Adrenal gland (tissue), 19 donors: ENCODE measurements at regions of chr4 and their contacts with region 1.

Region 1: GRCh38 chr4:78644744-78645330 is 93.3 kb downstream of the ANXA3 start:
- DNase-seq: peak; percentile 58 to 91 (median 72)
- H3K4me3 ChIP-seq: no peak overlapping the region
- H3K27ac ChIP-seq: peak overlapping the region in 3 of 5 donors; percentile 53 to 87 (median 68)
- H3K4me1 ChIP-seq: peaks cover 14 to 21% of the 10 kb centered on the region in 2 donors
- H3K27me3 ChIP-seq: no peaks in the 10 kb centered on the region
- CTCF ChIP-seq: peak; percentile 91 to 99 (median 96)
- POLR2A ChIP-seq: no peak

Region 2: GRCh38 chr4:78432896-78433295 is 211.9 kb before region 1 on chr4:
- intact Hi-C with region 1: no loop called
- DNase-seq: no peak
- H3K4me3 ChIP-seq: no peak overlapping the region
- H3K27ac ChIP-seq: no peak overlapping the region
- H3K4me1 ChIP-seq: no peaks in the 10 kb centered on the region
- H3K27me3 ChIP-seq: no peaks in the 10 kb centered on the region
- CTCF ChIP-seq: no peak
- POLR2A ChIP-seq: no peak

Region 3: DNA sequence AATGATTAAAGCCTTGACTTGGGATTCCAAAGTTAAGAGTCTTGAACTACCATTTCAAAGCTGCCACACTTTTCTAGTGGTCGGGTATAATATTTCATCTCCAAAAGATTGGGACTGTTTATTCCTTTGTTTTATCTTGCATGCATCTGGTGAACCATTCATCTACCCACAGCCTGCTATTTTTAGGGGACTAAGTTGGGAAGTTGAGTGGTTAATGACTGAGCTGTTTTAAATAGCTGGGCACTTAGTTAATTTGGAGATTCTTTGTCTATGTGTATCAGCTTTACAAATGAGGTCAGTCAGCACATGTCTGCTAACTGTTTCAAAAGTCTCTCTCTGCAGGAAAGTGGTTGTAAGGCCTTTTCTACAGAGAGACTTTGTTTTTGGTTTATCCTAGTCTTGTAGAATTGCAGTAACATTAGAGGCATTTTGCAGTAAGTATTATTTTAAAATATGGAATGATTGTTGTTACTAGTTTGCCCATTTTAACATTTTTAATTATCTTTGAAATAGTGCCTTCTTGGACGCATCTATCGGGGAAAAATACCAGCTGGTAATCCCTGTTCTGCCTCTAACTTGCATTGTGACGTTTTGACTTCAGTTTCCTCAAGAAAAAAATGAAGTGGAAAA is 139.5 kb after region 1 on chr4:
- intact Hi-C with region 1: loop called (anchors 10 kb)
- DNase-seq: no peak
- H3K4me3 ChIP-seq: no peak overlapping the region
- H3K27ac ChIP-seq: no peak overlapping the region
- H3K4me1 ChIP-seq: peaks cover 4 to 23% of the 10 kb centered on the region in 2 donors
- H3K27me3 ChIP-seq: no peaks in the 10 kb centered on the region
- CTCF ChIP-seq: no peak
- POLR2A ChIP-seq: no peak

Region 4: DNA sequence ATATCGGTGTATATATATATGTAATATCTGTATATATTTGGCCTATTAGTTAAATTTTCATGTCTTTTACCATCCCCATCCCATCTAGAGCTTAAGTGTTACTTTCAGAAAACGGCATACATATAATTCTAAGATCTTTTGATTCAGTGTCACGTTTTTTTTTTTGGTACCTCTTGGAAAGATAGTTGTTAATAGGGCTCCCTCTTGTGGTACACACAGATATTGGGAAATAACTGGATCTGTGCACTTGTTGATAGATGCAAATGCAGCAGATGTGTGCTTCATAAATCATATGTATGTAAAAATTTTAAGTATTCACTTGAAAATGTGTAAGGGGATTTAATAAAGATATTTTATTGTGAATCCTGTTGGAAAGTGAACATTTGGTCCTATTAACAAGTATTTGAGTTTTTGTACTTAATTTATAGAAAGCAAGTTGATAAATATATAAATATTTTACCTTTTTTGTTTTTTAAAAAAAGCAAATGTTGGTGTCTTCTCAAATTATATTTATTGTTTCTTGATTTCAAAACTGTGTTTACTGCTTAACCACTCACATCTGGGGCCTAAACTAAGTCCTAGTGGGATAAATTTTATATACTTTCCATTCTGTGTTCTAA is 219.7 kb after region 1 on chr4:
- intact Hi-C with region 1: loop called in 1 of 2 experiments (anchors 10 kb)
- DNase-seq: peak in 3 of 7 donors; percentile 15 to 35 (median 23)
- H3K4me3 ChIP-seq: no peak overlapping the region
- H3K27ac ChIP-seq: no peak overlapping the region
- H3K4me1 ChIP-seq: no peaks in the 10 kb centered on the region
- H3K27me3 ChIP-seq: no peaks in the 10 kb centered on the region
- CTCF ChIP-seq: peak; percentile 54 to 91 (median 80)
- POLR2A ChIP-seq: no peak